ENCODE measurements at regions of chr2 and their contacts with region 1.

Region 1: GRCh38 chr2:113203901-113204519 is 30.2 kb downstream of the PSD4 start:
- DNase-seq: peak in 1 of 2 donors; percentile 51
- H3K4me3 ChIP-seq: no peak overlapping the region
- H3K27ac ChIP-seq: peak overlapping the region in 1 of 2 donors; percentile 5
- H3K4me1 ChIP-seq: no peaks in the 10 kb centered on the region
- H3K27me3 ChIP-seq: no peaks in the 10 kb centered on the region
- CTCF ChIP-seq: peak in 2 of 3 donors; percentile 66 to 85
- POLR2A ChIP-seq: no peak

Region 2: DNA sequence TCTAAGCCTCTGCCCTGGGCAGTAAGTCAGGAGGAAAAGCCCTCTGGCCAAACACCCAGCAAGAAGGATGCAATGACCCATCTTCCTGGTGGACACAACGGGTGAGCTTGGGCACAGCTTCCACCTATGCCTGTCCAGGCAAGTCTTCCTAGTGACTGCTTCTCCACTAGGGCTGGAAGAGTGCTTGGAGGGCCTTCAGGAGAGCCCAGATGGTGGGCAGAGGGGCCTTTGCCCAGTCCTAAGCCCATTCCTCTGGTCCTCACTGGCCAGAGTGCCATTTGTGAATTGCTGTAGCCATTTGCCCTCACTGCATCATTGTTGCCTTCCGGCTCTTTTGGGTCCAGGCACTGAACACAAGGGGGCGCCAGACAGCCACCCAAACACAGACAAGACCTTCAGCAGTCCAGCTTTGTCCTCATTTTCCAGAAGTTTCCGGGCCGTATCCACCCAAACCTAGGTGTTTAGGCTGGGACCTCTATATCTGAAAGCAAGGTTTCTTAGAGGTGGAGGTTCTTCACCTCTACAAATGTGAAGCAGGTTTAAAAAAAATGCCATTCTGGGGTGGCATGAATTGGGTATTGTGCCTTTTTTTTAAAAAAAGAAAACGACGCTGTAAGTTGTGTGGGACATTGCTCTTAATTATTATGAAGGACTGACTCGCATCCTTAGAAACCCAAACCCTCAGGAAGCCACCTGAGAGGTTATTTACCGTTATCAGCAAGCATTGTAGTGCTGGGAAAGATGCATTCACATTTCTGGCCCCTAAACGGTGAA is 45.2 kb after region 1 on chr2:
- intact Hi-C with region 1: loop called (anchors 2 kb)
- DNase-seq: peak; percentile 74 to 77
- H3K4me3 ChIP-seq: no peak overlapping the region
- H3K27ac ChIP-seq: no peak overlapping the region
- H3K4me1 ChIP-seq: no peaks in the 10 kb centered on the region
- H3K27me3 ChIP-seq: no peaks in the 10 kb centered on the region
- CTCF ChIP-seq: peak; percentile 84 to 91 (median 90)
- POLR2A ChIP-seq: no peak

Measured in breast epithelium (tissue), 4 donors.